ENCODE measurements at regions of chr2 and their contacts with region 1.

Region 1: DNA sequence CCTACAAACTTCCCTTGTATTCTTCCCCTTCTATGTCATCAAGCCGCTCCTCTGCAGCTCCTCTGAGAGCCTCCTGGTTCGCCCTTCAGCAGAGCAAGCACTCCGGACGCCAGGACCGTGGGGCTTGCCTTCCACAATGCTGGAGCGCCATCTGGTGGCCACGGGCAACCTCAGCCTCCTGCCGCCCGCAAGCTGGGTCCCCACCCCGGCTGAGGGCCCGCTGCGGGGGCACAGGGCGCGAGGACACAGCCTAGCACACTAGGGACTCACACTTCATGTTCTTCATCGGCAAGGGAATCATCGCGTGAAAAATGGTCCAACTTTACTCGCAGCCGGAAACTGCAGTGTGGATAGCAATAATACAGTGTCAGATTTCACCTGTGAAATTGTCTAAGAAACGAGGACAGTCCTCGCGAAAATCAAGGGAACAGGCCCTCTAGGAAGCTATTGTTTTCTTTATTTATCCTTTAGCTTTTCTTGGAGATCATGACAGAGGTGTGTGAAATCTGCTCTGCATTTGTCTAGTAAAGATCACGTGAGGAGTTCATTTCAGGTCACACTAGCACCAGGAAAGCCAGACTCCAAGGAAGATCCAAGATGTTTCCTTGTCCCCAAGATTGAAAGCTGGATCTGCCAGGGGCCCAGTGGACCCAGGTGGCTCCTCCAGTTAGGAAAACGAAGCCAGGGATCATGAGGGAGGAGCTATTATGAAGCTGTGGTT is 5.8 kb downstream of the PRLH start:
- DNase-seq: peak; percentile 93
- H3K4me3 Mint-ChIP-seq: peak overlapping the region; percentile 47
- H3K27ac Mint-ChIP-seq: no peak overlapping the region
- H3K4me1 Mint-ChIP-seq: peaks cover 33% of the 10 kb centered on the region
- H3K27me3 Mint-ChIP-seq: peaks cover 10% of the 10 kb centered on the region
- CTCF ChIP-seq: peak; percentile 98

Region 2: GRCh38 chr2:237154082-237154638 is 418.0 kb before region 1 on chr2:
- CTCF ChIA-PET with region 1: interaction called, 6 read pairs
- intact Hi-C with region 1: loop called (anchors 1 kb)
- DNase-seq: peak; percentile 73
- H3K4me3 Mint-ChIP-seq: no peak overlapping the region
- H3K27ac Mint-ChIP-seq: no peak overlapping the region
- H3K4me1 Mint-ChIP-seq: no peaks in the 10 kb centered on the region
- H3K27me3 Mint-ChIP-seq: peaks cover 15% of the 10 kb centered on the region
- CTCF ChIP-seq: peak; percentile 83

Region 3: DNA sequence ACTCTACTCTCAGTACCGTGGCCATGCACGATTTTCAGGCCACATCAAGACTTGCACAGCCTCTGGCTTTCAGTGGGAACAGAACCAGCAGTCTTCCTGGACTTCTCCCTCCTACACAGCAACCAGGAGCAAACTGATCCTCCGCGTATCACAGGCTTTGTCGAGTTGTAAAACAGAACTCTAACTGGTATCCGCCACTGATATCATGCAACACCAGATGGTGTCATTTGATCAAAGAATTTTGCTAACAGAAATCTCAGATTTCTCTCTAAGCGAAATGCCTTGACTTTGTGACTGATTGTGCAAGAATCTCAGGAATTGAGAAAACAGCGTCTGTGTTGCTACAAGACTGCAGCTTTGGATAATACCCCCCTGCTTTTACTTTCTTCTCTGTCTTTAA is 400.8 kb before region 1 on chr2:
- CTCF ChIA-PET with region 1: no interaction called
- intact Hi-C with region 1: loop called (anchors 5 kb)
- DNase-seq: peak; percentile 21
- H3K4me3 Mint-ChIP-seq: no peak overlapping the region
- H3K27ac Mint-ChIP-seq: no peak overlapping the region
- H3K4me1 Mint-ChIP-seq: peaks cover 11% of the 10 kb centered on the region
- H3K27me3 Mint-ChIP-seq: peaks cover 22% of the 10 kb centered on the region
- CTCF ChIP-seq: peak; percentile 17

Region 4: GRCh38 chr2:237434866-237435311 is 137.3 kb before region 1 on chr2:
- CTCF ChIA-PET with region 1: no interaction called
- intact Hi-C with region 1: no loop called
- DNase-seq: no peak
- H3K4me3 Mint-ChIP-seq: no peak overlapping the region
- H3K27ac Mint-ChIP-seq: no peak overlapping the region
- H3K4me1 Mint-ChIP-seq: peaks cover 17% of the 10 kb centered on the region
- H3K27me3 Mint-ChIP-seq: peaks cover 37% of the 10 kb centered on the region
- CTCF ChIP-seq: no peak

Region 5: DNA sequence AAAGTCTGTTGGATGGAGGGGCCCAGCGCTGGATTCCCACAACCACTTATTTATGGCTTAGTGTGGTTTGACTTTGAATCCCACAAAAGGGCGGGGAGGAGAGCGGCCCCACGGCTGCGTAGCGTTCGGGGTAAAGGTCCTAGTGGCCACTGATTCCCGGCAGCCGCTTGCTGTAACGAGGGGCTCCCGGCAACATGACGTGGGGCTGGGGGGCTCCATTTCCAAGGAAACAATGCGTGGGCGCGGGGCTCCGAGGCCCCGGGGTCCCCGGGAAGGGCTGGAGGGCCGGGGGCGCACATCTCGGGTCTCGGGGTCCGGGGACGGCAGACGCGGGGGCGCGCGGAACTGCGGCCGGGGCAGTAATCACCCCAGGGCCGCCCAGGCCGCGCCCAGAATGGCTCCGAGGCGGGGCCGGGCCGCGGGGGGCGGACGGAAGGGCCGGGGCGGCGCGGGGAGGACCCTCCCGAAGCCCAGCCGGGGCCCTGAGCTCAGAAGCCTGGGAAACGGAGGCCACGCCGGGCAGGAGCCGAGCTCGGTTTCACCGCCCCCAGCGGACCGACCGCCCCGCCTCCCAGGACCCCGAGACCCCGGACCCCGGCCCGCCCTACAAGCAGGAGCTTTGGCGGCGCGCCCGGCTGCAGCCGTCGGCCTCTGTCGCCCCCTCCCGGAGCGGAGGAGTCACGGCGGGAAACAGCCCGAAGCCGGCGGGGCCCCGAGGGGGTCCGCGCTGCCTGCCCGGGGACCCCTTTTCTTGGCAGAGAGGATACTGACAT is 97.1 kb before region 1 on chr2:
- CTCF ChIA-PET with region 1: interaction called, 45 read pairs
- intact Hi-C with region 1: loop called (anchors 1 kb)
- DNase-seq: peak; percentile 86
- H3K4me3 Mint-ChIP-seq: peak overlapping the region; percentile 86
- H3K27ac Mint-ChIP-seq: peak overlapping the region; percentile 90
- H3K4me1 Mint-ChIP-seq: peaks cover 14% of the 10 kb centered on the region
- H3K27me3 Mint-ChIP-seq: peaks cover 45% of the 10 kb centered on the region
- CTCF ChIP-seq: peak; percentile 89

Region 6: GRCh38 chr2:237583385-237584295 is 11.5 kb after region 1 on chr2:
- CTCF ChIA-PET with region 1: no interaction called
- intact Hi-C with region 1: no loop called
- DNase-seq: no peak
- H3K4me3 Mint-ChIP-seq: no peak overlapping the region
- H3K27ac Mint-ChIP-seq: no peak overlapping the region
- H3K4me1 Mint-ChIP-seq: peaks cover 11% of the 10 kb centered on the region
- H3K27me3 Mint-ChIP-seq: no peaks in the 10 kb centered on the region
- CTCF ChIP-seq: no peak

Region 7: DNA sequence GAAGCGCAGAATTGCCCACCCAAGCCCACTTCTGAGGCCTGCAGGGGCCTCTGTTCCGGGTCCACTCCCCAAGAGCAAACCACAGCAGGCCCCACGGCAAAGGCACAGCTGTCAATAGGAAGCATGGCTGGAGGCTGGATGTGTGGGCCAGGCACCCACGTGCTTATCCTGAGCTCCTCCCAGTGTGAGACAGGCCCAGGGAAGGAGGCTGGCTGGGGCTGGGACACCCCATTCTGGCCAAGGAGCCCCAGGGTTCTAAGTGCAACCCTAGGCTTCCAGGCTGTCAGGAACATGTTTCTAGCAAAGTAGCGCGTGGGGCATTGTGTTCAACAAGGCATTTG is 24.3 kb after region 1 on chr2:
- CTCF ChIA-PET with region 1: no interaction called
- intact Hi-C with region 1: no loop called
- DNase-seq: no peak
- H3K4me3 Mint-ChIP-seq: no peak overlapping the region
- H3K27ac Mint-ChIP-seq: no peak overlapping the region
- H3K4me1 Mint-ChIP-seq: peaks cover 4% of the 10 kb centered on the region
- H3K27me3 Mint-ChIP-seq: peaks cover 44% of the 10 kb centered on the region
- CTCF ChIP-seq: no peak

Measured in Calu3 (cell line).